PC-9 (cell line): ENCODE measurements at regions of chr3 and their contacts with region 1.

Region 1: GRCh38 chr3:127360647-127361046 is 72.8 kb upstream of the PRR20G start:
- DNase-seq: no peak
- H3K4me3 ChIP-seq: no peak overlapping the region
- H3K27ac ChIP-seq: no peak overlapping the region
- H3K4me1 ChIP-seq: no peaks in the 10 kb centered on the region
- H3K27me3 ChIP-seq: peaks cover 40% of the 10 kb centered on the region
- CTCF ChIP-seq: no peak

Region 2: GRCh38 chr3:125662675-125663074 is 1698.0 kb before region 1 on chr3:
- CTCF ChIA-PET with region 1: no interaction called
- POLR2A ChIA-PET with region 1: interaction called, 28 read pairs
- intact Hi-C with region 1: no loop called
- DNase-seq: peak in 1 of 2 experiments; percentile 64
- H3K4me3 ChIP-seq: no peak overlapping the region
- H3K27ac ChIP-seq: no peak overlapping the region
- H3K4me1 ChIP-seq: peaks cover 9% of the 10 kb centered on the region
- H3K27me3 ChIP-seq: no peaks in the 10 kb centered on the region
- CTCF ChIP-seq: no peak

Region 3: DNA sequence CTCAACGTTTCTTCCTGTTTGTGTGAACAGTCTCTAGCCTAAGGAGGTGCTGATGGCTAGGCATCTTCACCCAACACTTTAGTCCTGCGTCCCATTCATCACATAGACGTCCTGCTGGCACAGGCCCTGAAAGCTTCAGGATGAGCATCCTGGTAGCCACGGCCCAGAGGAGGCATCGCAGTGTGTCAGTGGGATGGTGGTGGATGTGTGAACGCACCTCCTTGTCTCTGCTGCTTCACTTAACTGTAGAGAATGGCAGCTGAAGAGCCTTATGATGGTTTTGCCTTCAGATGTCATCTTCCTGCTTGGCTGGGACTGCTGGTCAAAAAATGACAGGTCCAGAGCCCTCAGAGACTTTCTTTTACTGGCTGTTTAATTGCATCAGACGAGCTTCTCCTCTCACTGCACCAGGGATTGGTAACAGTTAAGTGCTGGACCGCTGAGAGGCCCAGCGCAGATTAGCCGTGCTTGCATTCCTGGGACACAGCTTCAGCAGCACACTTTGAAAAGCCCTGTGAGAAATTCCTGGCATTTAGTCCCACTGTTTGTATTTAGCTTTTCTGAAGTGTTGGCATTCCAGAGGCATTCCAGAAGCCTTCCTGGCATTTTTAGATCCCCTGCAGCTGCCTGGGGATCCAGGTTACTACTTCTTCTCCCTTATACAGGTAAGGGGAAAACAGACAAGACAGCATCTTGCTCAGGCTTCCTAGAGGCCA is 510.1 kb before region 1 on chr3:
- CTCF ChIA-PET with region 1: no interaction called
- POLR2A ChIA-PET with region 1: no interaction called
- intact Hi-C with region 1: no loop called
- DNase-seq: peak in 1 of 2 experiments; percentile 56
- H3K4me3 ChIP-seq: no peak overlapping the region
- H3K27ac ChIP-seq: no peak overlapping the region
- H3K4me1 ChIP-seq: no peaks in the 10 kb centered on the region
- H3K27me3 ChIP-seq: no peaks in the 10 kb centered on the region
- CTCF ChIP-seq: no peak